ENCODE measurements at regions of chr10 and their contacts with region 1.

Region 1: DNA sequence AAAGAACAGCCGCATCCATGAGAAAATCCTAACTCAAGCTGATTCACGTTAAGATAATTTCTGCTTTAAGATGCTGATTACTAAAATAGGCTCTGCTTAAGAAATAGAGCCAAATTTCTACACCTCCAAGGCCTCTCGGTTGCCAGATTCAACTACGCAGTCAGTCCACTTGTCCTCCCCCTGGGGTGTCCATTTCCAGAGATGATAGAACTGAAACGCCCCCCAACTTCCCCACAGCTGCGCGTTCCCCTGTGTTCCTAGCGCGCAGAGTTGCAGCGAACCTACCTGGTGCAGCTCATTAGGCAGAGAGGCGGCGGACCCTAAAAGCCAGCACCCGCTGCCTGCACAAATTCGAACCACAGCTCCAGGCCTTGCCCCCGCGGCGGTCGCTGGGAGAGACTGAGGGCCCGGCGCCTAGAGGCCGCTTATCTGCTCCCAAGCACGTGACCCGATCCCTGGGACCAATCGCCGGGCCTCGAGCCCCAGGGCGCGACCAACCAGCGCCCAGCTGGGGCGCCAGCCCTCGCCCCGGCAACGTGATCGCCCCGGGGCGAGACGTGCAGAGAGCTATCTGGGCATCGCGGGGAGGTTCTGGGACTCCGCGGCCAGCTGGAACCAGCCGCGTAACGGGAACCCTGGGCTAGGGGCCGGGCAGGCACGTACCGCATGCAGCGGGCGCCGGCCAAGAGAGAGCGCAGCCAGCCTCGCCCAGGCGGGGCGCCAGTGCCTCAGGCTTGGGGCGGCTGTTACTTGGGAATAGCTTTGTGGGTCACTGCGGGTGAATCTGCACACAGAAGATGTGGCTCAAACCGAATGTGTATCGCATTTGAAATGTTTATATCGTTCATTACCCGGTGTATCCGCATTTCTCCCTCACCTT is at the start of gene PPP1R3C:
- DNase-seq: peak; percentile 92 to 96 (median 94)
- ATAC-seq: peak; percentile 88 to 95 (median 94)
- H3K4me3 ChIP-seq: peak within 1 kb of the TSS; percentile 40 to 73 (median 69)
- H3K27ac ChIP-seq: peak within 1 kb of the TSS; percentile 60 to 90 (median 78)
- H3K4me1 ChIP-seq: peaks cover 0 to 25% (median 16%) of the 10 kb centered on the region in 3 donors
- H3K27me3 ChIP-seq: no peaks in the 10 kb centered on the region
- CTCF ChIP-seq: peak in 1 of 4 donors; percentile 18
- total RNA-seq, gene PPP1R3C: 7.1 to 27.5 (median 17.3) TPM

Region 2: DNA sequence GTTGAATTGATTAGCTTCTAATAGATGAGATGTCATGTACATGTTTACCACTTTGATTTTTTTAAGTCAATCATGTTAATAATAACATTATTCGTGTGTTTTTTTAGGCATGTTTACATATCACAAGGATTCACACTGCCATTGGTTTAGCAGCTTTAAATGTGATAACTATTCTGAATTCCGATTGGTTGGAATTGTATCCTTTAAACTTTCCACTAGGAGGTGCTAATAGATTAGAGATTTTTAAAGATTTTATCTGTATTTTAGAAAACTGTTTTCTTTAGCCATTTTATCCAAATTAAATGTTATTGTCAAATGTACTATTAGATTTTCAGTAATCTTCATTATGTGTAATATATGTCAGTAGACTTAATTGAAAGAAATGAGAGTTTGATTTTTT is 139.6 kb before region 1 on chr10:
- intact Hi-C with region 1: loop called in 2 of 3 experiments (anchors 5 to 10 kb)
- DNase-seq: no peak
- ATAC-seq: peak in 3 of 4 donors; percentile 58 to 84 (median 70)
- H3K4me3 ChIP-seq: no peak overlapping the region
- H3K27ac ChIP-seq: no peak overlapping the region
- H3K4me1 ChIP-seq: no peaks in the 10 kb centered on the region
- H3K27me3 ChIP-seq: no peaks in the 10 kb centered on the region
- CTCF ChIP-seq: peak in 3 of 4 donors; percentile 12 to 21 (median 17)

Region 3: GRCh38 chr10:91556691-91557566 is 76.0 kb before region 1 on chr10:
- intact Hi-C with region 1: loop called in 2 of 3 experiments (anchors 2 to 10 kb)
- DNase-seq: peak in 3 of 6 donors; percentile 69 to 76 (median 73)
- ATAC-seq: peak; percentile 85 to 91 (median 86)
- H3K4me3 ChIP-seq: no peak overlapping the region
- H3K27ac ChIP-seq: peak overlapping the region; percentile 39 to 86 (median 68)
- H3K4me1 ChIP-seq: peaks cover 14 to 35% (median 27%) of the 10 kb centered on the region in 3 donors
- H3K27me3 ChIP-seq: no peaks in the 10 kb centered on the region
- CTCF ChIP-seq: no peak

Region 4: DNA sequence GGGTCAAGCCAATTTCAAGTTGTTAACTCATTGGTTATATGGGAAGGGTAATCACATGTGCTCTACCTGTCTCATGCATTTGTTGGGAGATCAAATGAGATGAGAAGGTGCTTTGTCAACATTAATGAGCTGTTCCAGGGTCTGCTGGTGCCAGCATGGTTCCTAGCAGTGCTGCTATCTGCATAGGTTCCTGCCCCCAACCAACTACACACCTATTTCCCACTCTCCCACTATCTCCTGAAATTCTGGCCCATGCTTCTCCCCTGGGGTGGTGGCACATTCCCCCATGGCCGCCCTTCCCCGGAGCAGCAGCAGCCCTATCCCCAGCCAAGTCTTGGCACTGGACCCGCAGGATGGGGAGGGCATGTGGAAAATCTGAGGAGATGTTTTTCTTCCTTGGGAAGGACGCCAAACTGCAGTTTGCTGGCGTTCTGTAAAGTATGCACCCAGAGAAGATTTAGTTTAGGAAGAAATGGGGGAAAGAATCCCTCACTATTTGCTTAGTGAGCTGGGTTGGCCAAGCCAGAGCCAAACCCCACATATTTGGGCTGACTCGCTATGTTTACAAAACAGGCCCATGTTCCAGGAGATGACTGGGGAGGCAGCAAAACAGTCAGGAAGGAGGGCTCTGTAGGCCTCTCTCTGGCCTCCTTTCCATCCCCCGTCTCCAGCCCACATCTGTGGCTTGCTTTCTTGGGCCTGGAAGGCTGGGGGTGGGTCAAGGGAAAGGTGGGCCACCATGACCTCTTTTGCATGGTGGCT is 42.6 kb before region 1 on chr10:
- intact Hi-C with region 1: loop called in 1 of 3 experiments (anchors 5 kb)
- DNase-seq: peak in 5 of 6 donors; percentile 37 to 75 (median 66)
- ATAC-seq: peak; percentile 25 to 42 (median 36)
- H3K4me3 ChIP-seq: no peak overlapping the region
- H3K27ac ChIP-seq: peak overlapping the region; percentile 56 to 88 (median 80)
- H3K4me1 ChIP-seq: peaks cover 56 to 70% (median 69%) of the 10 kb centered on the region in 3 donors
- H3K27me3 ChIP-seq: no peaks in the 10 kb centered on the region
- CTCF ChIP-seq: no peak